Breast epithelium (tissue), 4 donors: ENCODE measurements at regions of chr1 and their contacts with region 1.

Region 1: GRCh38 chr1:209549443-209550205 is 33.9 kb upstream of the CAMK1G start:
- DNase-seq: no peak
- H3K4me3 ChIP-seq: no peak overlapping the region
- H3K27ac ChIP-seq: no peak overlapping the region
- H3K4me1 ChIP-seq: no peaks in the 10 kb centered on the region
- H3K27me3 ChIP-seq: no peaks in the 10 kb centered on the region
- CTCF ChIP-seq: no peak
- POLR2A ChIP-seq: no peak

Region 2: GRCh38 chr1:208445758-208446203 is 1103.8 kb before region 1 on chr1:
- intact Hi-C with region 1: no loop called
- DNase-seq: no peak
- H3K4me3 ChIP-seq: no peak overlapping the region
- H3K27ac ChIP-seq: no peak overlapping the region
- H3K4me1 ChIP-seq: no peaks in the 10 kb centered on the region
- H3K27me3 ChIP-seq: no peaks in the 10 kb centered on the region
- CTCF ChIP-seq: no peak
- POLR2A ChIP-seq: no peak

Region 3: DNA sequence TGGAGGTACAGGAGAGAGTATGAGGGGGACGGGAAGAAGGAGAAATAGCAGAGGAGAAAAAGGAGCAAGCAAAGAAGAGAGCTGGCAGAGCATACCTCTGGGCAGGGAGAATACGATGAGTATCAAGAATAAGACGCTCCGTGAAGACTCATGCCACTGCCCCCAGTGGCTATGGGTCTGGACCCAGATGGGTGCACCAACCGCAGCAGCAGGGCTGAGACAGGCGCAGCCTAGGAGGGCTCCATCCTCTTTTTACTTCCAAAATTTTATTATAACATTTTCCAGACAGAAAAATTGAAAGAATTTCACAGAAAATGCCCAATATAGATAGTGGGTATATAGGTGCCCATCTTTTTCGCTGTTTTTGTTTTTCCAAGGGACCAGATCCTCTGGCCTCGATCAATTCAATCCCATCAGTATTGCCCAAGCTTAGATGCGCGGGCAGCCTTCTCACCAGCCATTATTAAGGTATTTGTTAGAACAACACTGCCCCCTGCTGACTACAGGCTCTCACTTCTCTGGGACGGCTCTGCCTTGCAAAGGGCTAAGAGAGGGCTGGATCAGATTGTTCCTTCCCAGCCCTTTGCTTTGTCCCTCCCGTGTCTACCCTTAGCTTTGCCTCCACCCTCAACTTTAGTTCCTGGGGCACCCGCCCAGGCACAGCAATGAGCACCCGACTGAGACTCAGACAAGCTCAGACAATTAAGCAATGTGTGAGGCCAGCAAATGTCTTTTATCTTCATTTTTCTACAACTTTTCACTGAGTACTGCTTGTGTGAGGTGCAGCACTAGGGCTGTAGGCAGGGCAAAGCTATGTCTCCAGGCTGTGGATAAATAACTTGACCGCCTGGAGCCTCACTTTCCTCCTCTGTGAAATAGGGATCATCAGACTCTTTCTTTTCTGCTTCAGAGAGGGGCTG is 16.4 kb after region 1 on chr1:
- intact Hi-C with region 1: no loop called
- DNase-seq: peak; percentile 69 to 78
- H3K4me3 ChIP-seq: no peak overlapping the region
- H3K27ac ChIP-seq: no peak overlapping the region
- H3K4me1 ChIP-seq: no peaks in the 10 kb centered on the region
- H3K27me3 ChIP-seq: peaks cover 0 to 3% of the 10 kb centered on the region in 2 donors
- CTCF ChIP-seq: peak; percentile 44 to 78 (median 66)
- POLR2A ChIP-seq: no peak

Region 4: GRCh38 chr1:210669951-210670350 is 1120.3 kb after region 1 on chr1:
- intact Hi-C with region 1: loop called (anchors 5 kb)
- DNase-seq: no peak
- H3K4me3 ChIP-seq: no peak overlapping the region
- H3K27ac ChIP-seq: no peak overlapping the region
- H3K4me1 ChIP-seq: no peaks in the 10 kb centered on the region
- H3K27me3 ChIP-seq: no peaks in the 10 kb centered on the region
- CTCF ChIP-seq: no peak
- POLR2A ChIP-seq: no peak